PC-9 (cell line): ENCODE measurements at regions of chr7 and their contacts with region 1.

Region 1: GRCh38 chr7:85023045-85023712 is 163.7 kb downstream of the SEMA3D start:
- DNase-seq: peak in 1 of 2 experiments; percentile 20
- H3K4me3 ChIP-seq: no peak overlapping the region
- H3K27ac ChIP-seq: no peak overlapping the region
- H3K4me1 ChIP-seq: no peaks in the 10 kb centered on the region; the same call in 1 of the 2 replicates
- H3K27me3 ChIP-seq: no peaks in the 10 kb centered on the region
- CTCF ChIP-seq: peak; percentile 87

Region 2: DNA sequence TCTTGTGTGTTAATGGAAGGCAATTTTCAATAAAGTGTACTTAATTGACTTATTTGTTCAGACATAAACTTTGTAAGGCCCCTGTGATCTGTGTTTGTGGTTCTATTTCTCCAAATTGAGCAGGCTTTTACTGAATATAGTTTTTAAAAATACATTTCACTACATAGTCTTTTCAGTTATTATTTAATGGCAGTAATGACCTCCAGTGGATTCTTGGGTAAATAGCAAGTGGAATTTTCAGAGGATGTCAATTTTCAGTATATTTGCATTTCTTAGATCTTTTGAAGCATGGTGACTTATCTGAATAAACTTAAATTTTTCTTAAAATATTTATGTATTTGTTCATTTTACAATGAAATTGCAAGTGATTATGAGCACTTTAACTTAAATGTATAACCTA is 1657.4 kb before region 1 on chr7:
- CTCF ChIA-PET with region 1: no interaction called
- POLR2A ChIA-PET with region 1: no interaction called
- intact Hi-C with region 1: loop called (anchors 2 kb)
- DNase-seq: no peak
- H3K4me3 ChIP-seq: no peak overlapping the region
- H3K27ac ChIP-seq: no peak overlapping the region
- H3K4me1 ChIP-seq: no peaks in the 10 kb centered on the region
- H3K27me3 ChIP-seq: no peaks in the 10 kb centered on the region
- CTCF ChIP-seq: peak; percentile 35; the same call in 1 of the 2 replicates

Region 3: DNA sequence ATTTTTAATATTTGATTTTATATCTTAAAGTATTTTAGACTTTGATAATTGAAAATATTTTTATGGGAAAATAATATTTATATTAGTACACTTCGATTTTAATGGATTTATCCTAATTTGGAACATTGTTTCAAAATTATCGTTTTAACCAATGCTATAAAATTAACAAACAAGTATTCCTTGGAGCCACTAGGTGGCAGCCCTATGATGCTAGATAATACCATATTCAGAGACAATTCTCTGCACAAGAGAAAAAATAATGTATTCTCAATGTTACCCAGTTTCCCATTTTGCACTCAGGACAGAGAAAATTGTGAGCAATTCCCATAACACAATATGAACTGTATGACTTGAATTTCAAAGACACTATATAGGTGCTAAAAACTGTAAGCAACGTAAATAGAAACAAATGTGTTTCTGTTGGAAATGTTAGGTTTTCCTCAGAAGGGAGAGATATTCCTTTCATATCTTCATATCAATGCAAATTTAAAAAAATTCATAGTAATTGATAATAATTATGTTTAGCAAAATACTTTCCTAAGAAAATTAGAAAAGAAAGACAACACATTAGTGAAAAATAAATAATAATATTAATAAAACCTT is 1612.1 kb before region 1 on chr7:
- CTCF ChIA-PET with region 1: no interaction called
- POLR2A ChIA-PET with region 1: no interaction called
- intact Hi-C with region 1: loop called (anchors 5 kb)
- DNase-seq: peak in 1 of 2 experiments; percentile 40
- H3K4me3 ChIP-seq: no peak overlapping the region
- H3K27ac ChIP-seq: no peak overlapping the region
- H3K4me1 ChIP-seq: no peaks in the 10 kb centered on the region
- H3K27me3 ChIP-seq: no peaks in the 10 kb centered on the region
- CTCF ChIP-seq: peak; percentile 83

Region 4: GRCh38 chr7:83936056-83936708 is 1087.0 kb before region 1 on chr7:
- CTCF ChIA-PET with region 1: interaction called, 21 read pairs
- POLR2A ChIA-PET with region 1: no interaction called
- intact Hi-C with region 1: loop called (anchors 1 kb)
- DNase-seq: peak; percentile 49 to 72
- H3K4me3 ChIP-seq: no peak overlapping the region
- H3K27ac ChIP-seq: no peak overlapping the region
- H3K4me1 ChIP-seq: no peaks in the 10 kb centered on the region
- H3K27me3 ChIP-seq: no peaks in the 10 kb centered on the region
- CTCF ChIP-seq: peak; percentile 91

Region 5: DNA sequence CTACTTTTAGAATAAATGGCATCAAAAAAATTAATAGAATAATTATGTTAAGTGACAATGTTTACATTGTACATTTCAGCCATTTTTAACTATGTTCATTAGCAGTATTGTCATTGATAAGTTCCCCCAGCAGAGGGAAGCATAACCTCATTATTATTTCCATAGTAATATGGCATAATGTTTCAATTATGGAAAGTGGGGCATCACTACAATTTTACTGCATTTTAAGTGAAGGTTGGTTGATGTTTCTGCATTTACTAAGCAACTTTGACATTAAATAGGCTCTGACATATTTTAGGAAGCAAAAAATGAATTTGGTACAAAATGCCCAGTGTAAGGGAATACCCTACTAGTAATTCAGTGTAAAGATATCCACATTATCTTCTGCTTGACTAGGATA is 1046.9 kb before region 1 on chr7:
- CTCF ChIA-PET with region 1: interaction called, 5 read pairs
- POLR2A ChIA-PET with region 1: no interaction called
- intact Hi-C with region 1: loop called (anchors 1 kb)
- DNase-seq: peak in 1 of 2 experiments; percentile 35
- H3K4me3 ChIP-seq: no peak overlapping the region
- H3K27ac ChIP-seq: no peak overlapping the region
- H3K4me1 ChIP-seq: no peaks in the 10 kb centered on the region
- H3K27me3 ChIP-seq: no peaks in the 10 kb centered on the region
- CTCF ChIP-seq: peak; percentile 83

Region 6: GRCh38 chr7:84529480-84530205 is 493.5 kb before region 1 on chr7:
- CTCF ChIA-PET with region 1: no interaction called
- POLR2A ChIA-PET with region 1: no interaction called
- intact Hi-C with region 1: loop called (anchors 2 kb)
- DNase-seq: peak; percentile 63 to 89
- H3K4me3 ChIP-seq: no peak overlapping the region
- H3K27ac ChIP-seq: peak overlapping the region; percentile 66
- H3K4me1 ChIP-seq: peaks cover 27% of the 10 kb centered on the region
- H3K27me3 ChIP-seq: no peaks in the 10 kb centered on the region
- CTCF ChIP-seq: no peak

Region 7: GRCh38 chr7:84975586-84976185 is 47.5 kb before region 1 on chr7:
- CTCF ChIA-PET with region 1: no interaction called
- POLR2A ChIA-PET with region 1: no interaction called
- intact Hi-C with region 1: no loop called
- DNase-seq: no peak
- H3K4me3 ChIP-seq: no peak overlapping the region
- H3K27ac ChIP-seq: no peak overlapping the region
- H3K4me1 ChIP-seq: no peaks in the 10 kb centered on the region
- H3K27me3 ChIP-seq: no peaks in the 10 kb centered on the region
- CTCF ChIP-seq: no peak